CD8-positive, alpha-beta T cell (primary cell): ENCODE measurements at regions of chr12 and their contacts with region 1.

Region 1: GRCh38 chr12:84874125-84874824 is 38.3 kb downstream of the SLC6A15 start:
- DNase-seq: peak in 2 of 9 experiments; percentile 26 to 46
- ATAC-seq: peak; percentile 49
- H3K4me3 ChIP-seq: no peak overlapping the region
- H3K4me3 Mint-ChIP-seq: no peak overlapping the region
- H3K27ac ChIP-seq: no peak overlapping the region
- H3K27ac Mint-ChIP-seq: no peak overlapping the region
- H3K4me1 ChIP-seq: no peaks in the 10 kb centered on the region
- H3K4me1 Mint-ChIP-seq: no peaks in the 10 kb centered on the region
- H3K27me3 ChIP-seq: no peaks in the 10 kb centered on the region
- H3K27me3 Mint-ChIP-seq: peaks cover 3% of the 10 kb centered on the region
- CTCF ChIP-seq: peak; percentile 82

Region 2: GRCh38 chr12:84741692-84742091 is 132.6 kb before region 1 on chr12:
- CTCF ChIA-PET with region 1: no interaction called
- POLR2A ChIA-PET with region 1: no interaction called
- intact Hi-C with region 1: no loop called
- DNase-seq: no peak
- ATAC-seq: no peak
- H3K4me3 ChIP-seq: no peak overlapping the region
- H3K4me3 Mint-ChIP-seq: no peak overlapping the region
- H3K27ac ChIP-seq: no peak overlapping the region
- H3K27ac Mint-ChIP-seq: no peak overlapping the region
- H3K4me1 ChIP-seq: no peaks in the 10 kb centered on the region
- H3K4me1 Mint-ChIP-seq: no peaks in the 10 kb centered on the region
- H3K27me3 ChIP-seq: no peaks in the 10 kb centered on the region
- H3K27me3 Mint-ChIP-seq: no peaks in the 10 kb centered on the region
- CTCF ChIP-seq: no peak

Region 3: GRCh38 chr12:85029456-85029855 is 155.2 kb after region 1 on chr12:
- CTCF ChIA-PET with region 1: interaction called, 12 read pairs
- POLR2A ChIA-PET with region 1: no interaction called
- intact Hi-C with region 1: loop called (anchors 1 to 2 kb)
- DNase-seq: peak in 1 of 9 experiments; percentile 2
- ATAC-seq: no peak
- H3K4me3 ChIP-seq: no peak overlapping the region
- H3K4me3 Mint-ChIP-seq: no peak overlapping the region
- H3K27ac ChIP-seq: no peak overlapping the region
- H3K27ac Mint-ChIP-seq: no peak overlapping the region
- H3K4me1 ChIP-seq: no peaks in the 10 kb centered on the region
- H3K4me1 Mint-ChIP-seq: no peaks in the 10 kb centered on the region
- H3K27me3 ChIP-seq: no peaks in the 10 kb centered on the region
- H3K27me3 Mint-ChIP-seq: peaks cover 2% of the 10 kb centered on the region
- CTCF ChIP-seq: peak; percentile 53

Region 4: DNA sequence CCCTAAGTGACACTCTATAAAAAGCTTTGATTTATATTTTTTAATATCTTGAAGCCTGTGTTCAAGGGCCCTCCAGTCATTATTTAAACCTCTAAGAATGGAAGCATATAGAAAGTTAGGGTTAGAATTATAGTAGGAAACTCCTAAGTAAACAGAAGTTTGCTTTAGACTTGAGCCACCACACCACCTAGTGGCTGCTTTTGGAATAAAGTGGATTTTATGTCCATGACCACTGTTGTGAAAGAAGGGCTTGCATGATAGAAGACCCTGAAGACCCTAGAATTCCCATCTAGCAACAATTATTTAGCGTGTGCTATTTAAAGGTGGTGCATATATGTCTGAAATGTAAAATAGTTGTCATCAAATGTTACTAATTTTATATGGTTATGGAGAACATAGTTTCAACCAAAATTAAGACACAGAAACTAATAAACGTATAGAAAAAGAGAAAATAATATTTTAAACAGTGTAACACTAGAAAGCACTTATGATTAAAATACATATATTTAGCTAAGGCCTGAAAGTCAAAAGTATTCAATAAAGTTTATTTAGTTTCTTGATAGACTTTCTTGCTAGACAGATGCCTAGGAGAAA is 183.2 kb after region 1 on chr12:
- CTCF ChIA-PET with region 1: interaction called, 3 read pairs
- POLR2A ChIA-PET with region 1: no interaction called
- intact Hi-C with region 1: loop called in 1 of 2 experiments (anchors 1 kb)
- DNase-seq: peak in 4 of 9 experiments; percentile 5 to 28 (median 11)
- ATAC-seq: no peak
- H3K4me3 ChIP-seq: no peak overlapping the region
- H3K4me3 Mint-ChIP-seq: no peak overlapping the region
- H3K27ac ChIP-seq: no peak overlapping the region
- H3K27ac Mint-ChIP-seq: no peak overlapping the region
- H3K4me1 ChIP-seq: no peaks in the 10 kb centered on the region
- H3K4me1 Mint-ChIP-seq: no peaks in the 10 kb centered on the region
- H3K27me3 ChIP-seq: no peaks in the 10 kb centered on the region
- H3K27me3 Mint-ChIP-seq: no peaks in the 10 kb centered on the region
- CTCF ChIP-seq: peak; percentile 67

Region 5: DNA sequence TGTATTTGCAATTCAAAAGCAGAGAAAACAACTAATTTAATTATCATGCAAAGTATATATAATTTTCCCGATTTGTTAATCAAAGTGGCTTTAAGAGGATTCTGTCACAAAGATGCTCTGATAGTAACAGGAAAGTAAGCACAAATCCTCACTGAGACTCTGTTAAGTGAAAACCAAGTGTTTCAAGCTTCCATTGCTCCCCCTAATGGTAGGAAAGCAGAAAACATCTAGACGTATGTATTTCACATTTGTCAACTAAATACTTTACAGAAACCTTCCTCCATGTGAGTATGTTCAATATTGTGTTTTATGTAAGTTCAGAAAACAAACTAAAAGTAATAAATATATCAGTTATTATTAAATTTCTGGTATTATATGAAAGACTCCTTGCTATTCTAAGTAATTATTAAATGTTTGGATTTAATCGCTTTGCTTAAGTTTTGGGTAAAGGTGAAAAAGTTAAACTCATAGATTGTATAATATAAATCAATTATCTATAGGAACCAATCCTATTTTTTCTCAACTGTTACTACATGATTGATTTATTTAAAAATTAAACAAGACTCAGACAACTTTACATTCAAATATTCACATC is 998.3 kb after region 1 on chr12:
- CTCF ChIA-PET with region 1: no interaction called
- POLR2A ChIA-PET with region 1: no interaction called
- intact Hi-C with region 1: loop called in 1 of 2 experiments (anchors 10 kb)
- DNase-seq: peak in 2 of 9 experiments; percentile 5 to 33
- ATAC-seq: no peak
- H3K4me3 ChIP-seq: no peak overlapping the region
- H3K4me3 Mint-ChIP-seq: no peak overlapping the region
- H3K27ac ChIP-seq: no peak overlapping the region
- H3K27ac Mint-ChIP-seq: no peak overlapping the region
- H3K4me1 ChIP-seq: no peaks in the 10 kb centered on the region
- H3K4me1 Mint-ChIP-seq: no peaks in the 10 kb centered on the region
- H3K27me3 ChIP-seq: no peaks in the 10 kb centered on the region
- H3K27me3 Mint-ChIP-seq: no peaks in the 10 kb centered on the region
- CTCF ChIP-seq: peak; percentile 66

Region 6: DNA sequence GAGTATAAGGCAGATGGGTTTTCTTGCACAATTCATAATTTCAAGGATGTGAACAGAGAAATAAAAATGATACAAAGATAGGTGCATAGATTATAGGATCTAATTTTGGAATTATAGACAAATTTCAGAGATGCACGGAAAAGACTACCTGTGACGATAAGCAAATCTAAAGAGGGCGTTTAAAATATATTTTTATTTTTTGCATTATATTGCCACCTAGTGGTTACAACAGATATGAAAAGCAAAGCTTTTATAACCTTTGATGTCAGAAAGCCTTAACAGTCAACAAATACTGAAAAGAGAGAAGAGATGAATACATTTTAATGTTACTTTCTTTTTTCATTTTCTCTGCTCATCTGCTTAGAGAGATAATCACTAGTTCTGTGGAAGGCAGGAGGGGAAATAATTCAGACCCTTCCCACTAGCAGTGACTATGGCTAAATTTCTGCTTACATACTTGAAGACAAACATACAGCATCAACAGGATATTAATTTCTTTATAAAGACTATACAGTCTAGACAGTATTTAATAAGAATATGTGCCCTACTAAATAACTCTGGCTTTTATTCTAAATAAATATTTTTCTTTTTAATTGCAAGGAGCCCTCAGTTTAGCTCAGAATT is 1046.2 kb after region 1 on chr12:
- CTCF ChIA-PET with region 1: no interaction called
- POLR2A ChIA-PET with region 1: no interaction called
- intact Hi-C with region 1: loop called in 1 of 2 experiments (anchors 5 kb)
- DNase-seq: peak in 1 of 9 experiments; percentile 9
- ATAC-seq: no peak
- H3K4me3 ChIP-seq: no peak overlapping the region
- H3K4me3 Mint-ChIP-seq: no peak overlapping the region
- H3K27ac ChIP-seq: no peak overlapping the region
- H3K27ac Mint-ChIP-seq: no peak overlapping the region
- H3K4me1 ChIP-seq: no peaks in the 10 kb centered on the region
- H3K4me1 Mint-ChIP-seq: no peaks in the 10 kb centered on the region
- H3K27me3 ChIP-seq: no peaks in the 10 kb centered on the region
- H3K27me3 Mint-ChIP-seq: no peaks in the 10 kb centered on the region
- CTCF ChIP-seq: peak; percentile 64